SK-N-SH (cell line): ENCODE measurements at regions of chr5 and their contacts with region 1.

Region 1: DNA sequence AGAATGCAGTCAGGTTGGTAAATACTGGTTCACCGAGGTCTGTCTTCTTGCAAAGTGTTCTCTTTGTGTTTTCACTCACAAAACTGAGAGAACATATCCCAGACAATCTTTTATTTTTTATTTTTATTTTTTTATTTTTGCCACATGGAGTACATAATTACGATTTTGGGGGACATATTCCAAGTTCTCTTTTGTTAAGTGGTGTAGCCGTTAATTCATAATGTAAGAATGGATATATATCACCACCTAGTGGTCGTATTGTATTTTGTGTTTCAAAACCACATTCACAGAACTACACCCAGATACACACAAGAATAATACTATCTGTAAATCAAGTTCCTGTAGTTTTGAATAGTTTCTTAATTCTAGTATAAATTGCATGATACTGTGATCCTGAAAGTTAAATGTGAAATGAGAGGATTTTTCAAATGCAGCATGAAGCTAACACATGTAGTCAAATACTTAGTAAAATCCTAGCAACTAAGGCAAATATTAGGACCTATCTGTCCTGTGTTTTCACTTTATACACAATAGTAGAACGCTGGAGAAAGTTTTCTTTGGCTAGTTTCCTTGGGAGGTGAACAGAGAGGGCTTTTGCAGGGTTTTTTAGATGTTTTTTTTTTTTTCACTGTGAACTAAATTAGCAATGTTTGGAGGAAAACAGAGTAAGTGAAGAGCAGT is 92.7 kb downstream of the VCAN start:
- DNase-seq: peak; percentile 13
- H3K4me3 ChIP-seq: no peak overlapping the region; a peak in 1 of 4 replicates
- H3K27ac ChIP-seq: peak overlapping the region; percentile 14 to 16; a peak in 1 of 4 replicates
- H3K4me1 ChIP-seq: peaks cover 10 to 12% of the 10 kb centered on the region in 2 experiments; a peak in 3 of 4 replicates
- H3K27me3 ChIP-seq: no peaks in the 10 kb centered on the region
- CTCF ChIP-seq: peak; percentile 78
- EP300 ChIP-seq: no peak
- RAD21 ChIP-seq: peak; percentile 83

Region 2: DNA sequence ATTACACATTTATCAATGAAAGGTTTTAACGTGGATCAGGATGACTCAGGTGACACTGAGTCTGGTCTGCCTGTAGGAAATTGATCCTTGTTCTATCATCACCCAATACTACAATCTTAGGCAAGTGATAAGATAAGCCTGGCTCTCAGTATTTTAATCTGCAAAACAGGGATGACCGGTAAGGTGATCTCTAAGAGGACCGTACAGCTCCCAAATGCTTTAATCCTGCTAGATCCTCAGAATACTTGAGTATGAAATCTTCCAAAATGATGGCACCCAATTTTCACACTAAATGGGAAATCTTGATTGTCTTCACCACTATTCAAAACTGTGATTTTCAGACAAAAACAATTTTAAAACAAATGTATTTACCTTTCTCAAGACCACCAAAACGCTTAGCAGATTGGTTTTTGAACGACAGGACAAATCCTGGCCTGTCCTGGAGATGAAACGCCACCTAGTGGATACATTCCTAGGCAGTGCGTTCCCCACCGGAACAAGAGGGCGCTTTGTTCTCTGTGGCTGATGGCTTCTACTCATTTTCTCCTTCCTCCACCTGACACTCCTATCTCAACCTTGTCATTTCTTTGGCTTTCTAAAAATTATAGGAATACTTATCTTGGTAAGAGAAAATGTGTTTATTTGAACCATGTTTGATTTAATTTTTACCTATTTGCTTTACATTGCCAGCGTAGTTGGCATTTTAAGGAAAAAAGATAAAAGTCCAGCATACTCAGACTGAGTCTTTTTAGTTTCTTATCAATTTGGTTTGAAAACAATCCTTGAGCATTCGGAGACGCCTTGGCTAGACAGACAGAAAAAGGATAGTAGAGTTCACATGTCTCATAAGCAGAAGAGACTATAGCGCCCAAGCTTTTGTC is 133.8 kb before region 1 on chr5:
- CTCF ChIA-PET with region 1: interaction called, 10 read pairs
- POLR2A ChIA-PET with region 1: no interaction called
- DNase-seq: peak; percentile 55
- H3K4me3 ChIP-seq: no peak overlapping the region; a peak in 1 of 4 replicates
- H3K27ac ChIP-seq: no peak overlapping the region
- H3K4me1 ChIP-seq: no peaks in the 10 kb centered on the region; a peak in 1 of 4 replicates
- H3K27me3 ChIP-seq: no peaks in the 10 kb centered on the region
- CTCF ChIP-seq: peak; percentile 89
- EP300 ChIP-seq: no peak
- RAD21 ChIP-seq: peak; percentile 85

Region 3: GRCh38 chr5:83473346-83474163 is 90.7 kb before region 1 on chr5:
- CTCF ChIA-PET with region 1: interaction called, 32 read pairs
- POLR2A ChIA-PET with region 1: no interaction called
- DNase-seq: peak; percentile 85
- H3K4me3 ChIP-seq: peak overlapping the region; percentile 67 to 95
- H3K27ac ChIP-seq: peak overlapping the region; percentile 92 to 93
- H3K4me1 ChIP-seq: peaks cover 8% of the 10 kb centered on the region in 2 experiments; a peak in 3 of 4 replicates
- H3K27me3 ChIP-seq: no peaks in the 10 kb centered on the region
- CTCF ChIP-seq: peak; percentile 96
- EP300 ChIP-seq: peak in 1 of 2 experiments; percentile 28; a peak in 1 of 4 replicates
- RAD21 ChIP-seq: peak; percentile 86

Region 4: GRCh38 chr5:83551821-83552220 is 12.4 kb before region 1 on chr5:
- CTCF ChIA-PET with region 1: interaction called, 11 read pairs
- POLR2A ChIA-PET with region 1: no interaction called
- DNase-seq: no peak
- H3K4me3 ChIP-seq: no peak overlapping the region
- H3K27ac ChIP-seq: peak overlapping the region; percentile 73 to 89
- H3K4me1 ChIP-seq: peaks cover 8 to 33% of the 10 kb centered on the region in 2 experiments
- H3K27me3 ChIP-seq: no peaks in the 10 kb centered on the region
- CTCF ChIP-seq: no peak
- EP300 ChIP-seq: peak in 1 of 2 experiments; percentile 12; a peak in 1 of 4 replicates
- RAD21 ChIP-seq: no peak